ENCODE measurements at regions of chr10 and their contacts with region 1.

Region 1: DNA sequence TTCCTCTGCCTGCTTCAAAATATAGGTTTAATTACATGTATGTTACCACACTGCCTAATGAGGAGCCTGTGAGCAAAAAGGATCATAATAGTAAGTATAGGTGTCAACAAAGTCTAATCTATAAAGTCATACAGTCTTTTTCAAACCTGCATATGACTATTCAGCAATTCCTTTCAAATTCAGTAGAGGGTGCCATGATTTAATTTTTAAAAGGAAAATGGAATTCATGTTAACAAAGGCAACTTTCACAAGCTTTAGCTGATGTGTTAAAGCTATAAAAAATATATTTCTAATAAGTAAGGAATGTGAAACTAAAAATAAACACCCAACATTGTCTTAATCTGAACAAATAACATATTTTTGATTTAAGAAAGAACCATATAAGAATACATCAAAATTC is 52.1 kb downstream of the MPP7 start:
- DNase-seq: peak; percentile 35
- H3K4me3 ChIP-seq: no peak overlapping the region
- H3K27ac ChIP-seq: no peak overlapping the region
- H3K4me1 ChIP-seq: peaks cover 41% of the 10 kb centered on the region
- H3K27me3 ChIP-seq: no peaks in the 10 kb centered on the region
- CTCF ChIP-seq: peak; percentile 53 to 57

Region 2: DNA sequence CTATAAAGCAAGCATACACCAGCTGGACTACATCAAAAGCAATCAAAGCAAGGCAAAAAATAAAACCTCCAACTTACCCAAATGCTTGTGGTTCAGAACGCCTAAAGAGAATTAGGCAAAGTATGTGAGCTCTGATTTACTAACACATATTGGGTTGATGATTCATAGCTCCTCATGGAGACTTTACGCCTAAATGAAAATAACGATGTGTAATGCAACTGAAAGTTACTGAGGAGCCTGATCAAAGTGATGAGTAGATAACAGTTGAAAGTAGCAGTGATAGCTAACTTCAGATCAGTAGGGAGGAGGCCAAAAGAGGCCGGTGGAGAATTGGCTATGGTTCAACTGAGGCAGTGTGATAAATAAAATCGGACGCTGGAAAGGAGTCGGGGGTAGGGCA is 32.9 kb before region 1 on chr10:
- CTCF ChIA-PET with region 1: no interaction called
- dilution Hi-C with region 1: no loop called
- in situ Hi-C with region 1: no loop called
- intact Hi-C with region 1: no loop called
- DNase-seq: peak; percentile 75
- H3K4me3 ChIP-seq: no peak overlapping the region
- H3K27ac ChIP-seq: no peak overlapping the region
- H3K4me1 ChIP-seq: no peaks in the 10 kb centered on the region
- H3K27me3 ChIP-seq: no peaks in the 10 kb centered on the region
- CTCF ChIP-seq: no peak

Region 3: GRCh38 chr10:28291881-28292297 is 41.1 kb after region 1 on chr10:
- CTCF ChIA-PET with region 1: no interaction called
- dilution Hi-C with region 1: no loop called
- in situ Hi-C with region 1: loop called (anchors 5 kb)
- intact Hi-C with region 1: no loop called
- DNase-seq: peak; percentile 90
- H3K4me3 ChIP-seq: no peak overlapping the region
- H3K27ac ChIP-seq: peak overlapping the region; percentile 85
- H3K4me1 ChIP-seq: peaks cover 16% of the 10 kb centered on the region
- H3K27me3 ChIP-seq: no peaks in the 10 kb centered on the region
- CTCF ChIP-seq: no peak

Region 4: GRCh38 chr10:28302638-28303488 is 52.1 kb after region 1 on chr10 and contains the start of gene MPP7:
- CTCF ChIA-PET with region 1: interaction called, 4 read pairs
- dilution Hi-C with region 1: no loop called
- in situ Hi-C with region 1: loop called in 1 of 2 experiments (anchors 5 kb)
- intact Hi-C with region 1: loop called (anchors 1 kb)
- DNase-seq: peak; percentile 99
- H3K4me3 ChIP-seq: peak within 1 kb of the TSS; percentile 72 to 97 (median 84)
- H3K27ac ChIP-seq: peak within 1 kb of the TSS; percentile 53
- H3K4me1 ChIP-seq: peaks cover 8% of the 10 kb centered on the region
- H3K27me3 ChIP-seq: no peaks in the 10 kb centered on the region
- CTCF ChIP-seq: peak in 1 of 2 donors; percentile 40
- total RNA-seq, gene MPP7: 10.0 to 23.0 TPM

Region 5: DNA sequence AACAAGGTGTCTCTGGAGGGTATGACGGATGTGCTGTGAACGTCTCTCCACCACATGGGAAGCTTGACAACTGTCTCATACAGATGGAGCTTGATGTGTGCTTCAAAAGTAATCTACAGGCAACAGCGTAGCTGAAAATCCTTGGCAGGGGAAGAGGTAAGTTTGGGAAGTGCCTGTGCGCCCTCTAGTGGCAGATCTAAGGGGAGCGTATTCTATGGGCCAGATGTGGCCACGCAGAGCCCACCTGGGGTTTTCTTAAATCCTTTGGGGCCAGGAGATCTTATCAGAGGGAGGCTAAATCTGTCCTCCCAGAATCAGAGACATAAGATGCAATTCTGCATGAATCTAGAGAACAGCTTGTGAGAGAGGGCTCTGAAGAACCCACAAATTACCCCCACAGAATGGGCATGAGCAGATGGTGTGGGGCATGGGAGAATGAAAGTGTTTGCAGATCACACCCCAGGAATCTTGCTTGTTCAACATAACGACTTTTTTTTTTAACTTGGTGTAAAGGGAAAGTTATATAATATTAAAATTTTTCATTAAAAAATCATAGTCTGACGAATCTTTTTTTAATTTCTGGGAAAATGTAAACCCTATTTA is 143.3 kb after region 1 on chr10:
- CTCF ChIA-PET with region 1: interaction called, 32 read pairs
- dilution Hi-C with region 1: no loop called
- in situ Hi-C with region 1: no loop called
- intact Hi-C with region 1: no loop called
- DNase-seq: peak; percentile 48
- H3K4me3 ChIP-seq: no peak overlapping the region
- H3K27ac ChIP-seq: no peak overlapping the region
- H3K4me1 ChIP-seq: no peaks in the 10 kb centered on the region
- H3K27me3 ChIP-seq: no peaks in the 10 kb centered on the region
- CTCF ChIP-seq: peak; percentile 92 to 97

Region 6: GRCh38 chr10:28532383-28533175 is 281.8 kb after region 1 on chr10 and contains the start of gene WAC:
- CTCF ChIA-PET with region 1: no interaction called
- dilution Hi-C with region 1: no loop called
- in situ Hi-C with region 1: no loop called
- intact Hi-C with region 1: loop called (anchors 10 kb)
- DNase-seq: peak; percentile 92
- H3K4me3 ChIP-seq: peak within 1 kb of the TSS; percentile 96 to 99 (median 97)
- H3K27ac ChIP-seq: peak within 1 kb of the TSS; percentile 97
- H3K4me1 ChIP-seq: peaks cover 3% of the 10 kb centered on the region
- H3K27me3 ChIP-seq: no peaks in the 10 kb centered on the region
- CTCF ChIP-seq: peak in 1 of 2 donors; percentile 26
- total RNA-seq, gene WAC: 57.0 to 105 TPM

Region 7: DNA sequence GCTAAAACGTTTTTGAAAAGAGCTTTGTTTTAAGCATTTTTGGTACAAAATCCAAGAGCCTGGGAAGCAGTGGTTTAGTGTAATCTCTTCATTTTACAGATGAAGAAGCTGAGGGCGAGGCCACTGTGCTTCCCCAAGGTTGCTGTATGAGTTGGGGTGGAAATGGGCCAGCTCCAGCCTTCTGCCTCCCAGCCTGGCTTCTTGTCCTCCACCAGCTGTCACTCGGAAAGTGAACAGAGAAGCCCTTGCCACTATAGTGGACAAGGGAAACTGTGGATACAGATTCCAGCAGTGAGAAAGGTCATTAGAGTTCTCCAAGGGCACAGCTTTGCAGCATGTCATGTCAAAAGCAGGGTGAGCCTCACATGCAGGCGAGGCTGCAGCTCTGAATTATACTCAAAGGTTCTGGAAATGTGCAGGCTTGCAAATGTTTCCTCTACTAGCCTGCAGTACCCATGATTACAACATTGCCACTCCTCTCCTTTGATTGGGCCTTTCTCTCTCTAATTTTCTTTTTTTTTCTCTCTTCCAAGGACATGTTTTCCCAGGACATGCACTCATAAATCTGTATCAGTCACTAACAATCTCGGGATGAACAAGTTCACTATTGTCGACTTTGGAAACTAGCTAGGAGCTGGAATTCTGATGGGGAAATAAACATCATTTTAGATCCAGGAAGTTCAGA is 459.6 kb after region 1 on chr10:
- CTCF ChIA-PET with region 1: no interaction called
- dilution Hi-C with region 1: no loop called
- in situ Hi-C with region 1: no loop called
- intact Hi-C with region 1: no loop called
- DNase-seq: no peak
- H3K4me3 ChIP-seq: no peak overlapping the region
- H3K27ac ChIP-seq: no peak overlapping the region
- H3K4me1 ChIP-seq: no peaks in the 10 kb centered on the region
- H3K27me3 ChIP-seq: no peaks in the 10 kb centered on the region
- CTCF ChIP-seq: no peak

Measured in mammary epithelial cell (primary cell).